ENCODE measurements at regions of chr9 and their contacts with region 1.

Region 1: DNA sequence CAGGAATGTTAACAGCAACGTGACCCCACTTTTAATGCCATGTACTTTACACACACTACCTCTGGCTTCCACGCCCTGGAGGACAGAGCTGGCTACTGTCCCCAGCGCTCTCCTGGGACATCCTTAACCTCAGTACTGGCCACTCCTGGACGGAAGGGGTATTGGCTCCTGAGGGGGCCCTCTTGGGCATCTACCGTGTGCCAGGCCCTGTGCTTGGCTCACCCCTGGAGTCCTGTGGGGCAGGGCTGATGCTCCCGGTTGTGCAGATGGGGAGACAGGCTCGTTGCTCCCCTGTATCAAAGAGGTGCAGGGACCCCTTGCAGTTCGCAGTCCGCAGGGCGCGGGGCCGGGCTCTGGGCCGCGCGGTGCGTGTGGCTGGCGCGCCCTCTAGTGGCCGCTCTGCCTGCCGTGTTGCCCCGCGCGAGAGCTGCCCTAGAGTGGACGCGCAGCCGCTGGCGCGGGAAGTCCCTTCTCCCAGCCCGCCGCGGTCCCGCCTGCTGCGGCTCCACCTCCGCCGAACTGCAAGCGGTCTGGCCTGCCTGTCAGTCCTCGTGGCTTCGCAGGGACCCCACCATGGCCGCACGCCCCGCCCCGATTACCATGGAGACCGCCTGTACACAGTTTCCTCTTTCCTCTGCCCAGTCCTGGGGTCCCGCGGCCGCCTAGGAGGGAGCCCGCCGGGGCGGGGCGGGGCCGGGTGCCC is at the start of gene WDR38:
- DNase-seq: peak; percentile 83
- ATAC-seq: peak; percentile 93
- H3K4me3 Mint-ChIP-seq: peak within 1 kb of the TSS; percentile 61
- H3K27ac Mint-ChIP-seq: peak within 1 kb of the TSS; percentile 47
- H3K4me1 Mint-ChIP-seq: peaks cover 9% of the 10 kb centered on the region
- H3K27me3 Mint-ChIP-seq: peaks cover 6% of the 10 kb centered on the region
- total RNA-seq, gene WDR38: not detected

Region 2: GRCh38 chr9:124708633-124709291 is 144.2 kb before region 1 on chr9:
- CTCF ChIA-PET with region 1: interaction called, 10 read pairs
- POLR2A ChIA-PET with region 1: no interaction called
- DNase-seq: no peak
- ATAC-seq: no peak
- H3K4me3 Mint-ChIP-seq: no peak overlapping the region
- H3K27ac Mint-ChIP-seq: no peak overlapping the region
- H3K4me1 Mint-ChIP-seq: no peaks in the 10 kb centered on the region
- H3K27me3 Mint-ChIP-seq: peaks cover 16% of the 10 kb centered on the region

Region 3: GRCh38 chr9:124771021-124771866 is 81.7 kb before region 1 on chr9 and contains the start of gene NR6A1:
- CTCF ChIA-PET with region 1: interaction called, 316 read pairs
- POLR2A ChIA-PET with region 1: interaction called, 3 read pairs
- DNase-seq: peak; percentile 95
- ATAC-seq: peak; percentile 94
- H3K4me3 Mint-ChIP-seq: peak within 1 kb of the TSS; percentile 82
- H3K27ac Mint-ChIP-seq: peak within 1 kb of the TSS; percentile 88
- H3K4me1 Mint-ChIP-seq: peaks cover 48% of the 10 kb centered on the region
- H3K27me3 Mint-ChIP-seq: peaks cover 58% of the 10 kb centered on the region
- total RNA-seq, gene NR6A1: 0.18 to 0.26 TPM

Region 4: DNA sequence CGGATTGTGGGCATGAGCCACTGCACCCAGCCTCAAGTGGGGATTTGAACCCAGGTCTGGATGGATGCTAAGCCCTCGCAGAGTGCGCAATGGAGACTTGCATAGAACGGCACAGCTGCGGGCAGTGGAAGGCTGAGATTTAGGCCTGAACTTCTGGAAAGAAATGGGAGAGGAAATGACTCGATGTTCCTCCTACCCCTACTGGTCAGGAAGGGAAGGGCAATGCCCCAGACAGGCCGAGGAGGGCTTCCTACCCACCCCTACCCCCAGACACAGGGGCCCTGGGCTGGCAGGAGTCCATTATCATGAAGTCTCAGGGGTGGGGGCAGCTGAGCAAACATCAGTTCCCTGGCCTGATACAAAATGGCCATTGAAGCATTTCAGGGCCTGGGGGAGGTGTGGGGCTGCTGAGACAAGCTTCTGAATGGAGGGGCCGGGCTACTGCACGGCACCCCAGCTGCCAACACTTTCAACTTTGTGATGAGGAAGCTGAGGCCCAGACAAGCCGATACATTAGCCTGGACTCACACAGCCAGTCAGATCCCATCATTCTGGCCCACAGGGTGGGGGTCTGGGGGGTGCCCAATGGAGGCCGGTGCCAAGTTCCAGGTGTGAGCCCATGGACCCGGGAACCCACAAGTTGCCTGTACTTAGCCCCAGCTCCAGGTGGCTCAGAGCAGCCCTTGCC is 13.2 kb before region 1 on chr9:
- CTCF ChIA-PET with region 1: interaction called, 47 read pairs
- POLR2A ChIA-PET with region 1: interaction called, 4 read pairs
- DNase-seq: no peak
- ATAC-seq: peak; percentile 49
- H3K4me3 Mint-ChIP-seq: no peak overlapping the region
- H3K27ac Mint-ChIP-seq: no peak overlapping the region
- H3K4me1 Mint-ChIP-seq: no peaks in the 10 kb centered on the region
- H3K27me3 Mint-ChIP-seq: peaks cover 13% of the 10 kb centered on the region

Region 5: GRCh38 chr9:124879226-124879625 is 26.2 kb after region 1 on chr9:
- CTCF ChIA-PET with region 1: interaction called, 11 read pairs
- POLR2A ChIA-PET with region 1: interaction called, 3 read pairs
- DNase-seq: no peak
- ATAC-seq: no peak
- H3K4me3 Mint-ChIP-seq: no peak overlapping the region
- H3K27ac Mint-ChIP-seq: no peak overlapping the region
- H3K4me1 Mint-ChIP-seq: no peaks in the 10 kb centered on the region
- H3K27me3 Mint-ChIP-seq: no peaks in the 10 kb centered on the region